A549 (cell line): ENCODE measurements at regions of chr10 and their contacts with region 1.

Region 1: DNA sequence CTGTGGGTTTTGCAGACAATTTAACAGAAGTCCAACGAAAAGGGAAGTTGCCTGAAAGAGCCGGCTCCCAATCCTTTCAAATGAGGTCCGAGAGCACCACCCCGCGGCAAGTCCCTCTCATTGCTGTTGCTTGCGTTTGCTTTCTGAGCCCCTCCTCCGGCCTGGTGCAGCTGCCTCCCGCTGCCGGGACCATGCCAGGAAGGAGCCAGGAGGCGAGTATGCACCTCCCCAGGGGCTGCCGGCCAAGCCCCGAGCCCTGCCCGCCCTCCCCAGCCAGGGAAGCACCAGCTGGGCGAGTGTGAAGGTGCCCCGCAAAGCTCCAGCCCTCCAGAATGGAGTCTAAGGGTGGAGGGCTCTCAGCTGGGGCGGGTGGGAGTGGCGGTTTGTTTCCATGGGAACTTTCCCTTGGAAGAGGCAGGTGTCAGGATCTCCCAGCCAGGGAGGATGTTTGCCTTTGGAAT is 25.8 kb upstream of the PPP2R2D start:
- DNase-seq: peak; percentile 79 to 84
- ATAC-seq: peak; percentile 64 to 92
- H3K4me3 ChIP-seq: no peak overlapping the region
- H3K27ac ChIP-seq: peak overlapping the region in 1 of 2 experiments; percentile 35; a peak in 1 of 6 replicates
- H3K4me1 ChIP-seq: peaks cover 14% of the 10 kb centered on the region; the same call in 2 of the 3 replicates
- CTCF ChIP-seq: peak; percentile 77
- EP300 ChIP-seq: no peak
- POLR2A ChIP-seq: no peak
- RAD21 ChIP-seq: peak; percentile 93

Region 2: GRCh38 chr10:130190055-130190736 is 1684.8 kb before region 1 on chr10:
- CTCF ChIA-PET with region 1: interaction called, 23 read pairs
- POLR2A ChIA-PET with region 1: no interaction called
- DNase-seq: peak; percentile 71 to 84
- ATAC-seq: peak; percentile 74 to 90
- H3K4me3 ChIP-seq: peak overlapping the region; percentile 52
- H3K27ac ChIP-seq: peak overlapping the region; percentile 66 to 89
- H3K4me1 ChIP-seq: no peaks in the 10 kb centered on the region
- CTCF ChIP-seq: peak; percentile 99
- EP300 ChIP-seq: no peak
- POLR2A ChIP-seq: no peak
- RAD21 ChIP-seq: peak; percentile 82 to 93

Region 3: GRCh38 chr10:131453594-131454355 is 421.2 kb before region 1 on chr10:
- CTCF ChIA-PET with region 1: interaction called, 10 read pairs
- POLR2A ChIA-PET with region 1: no interaction called
- DNase-seq: peak in 1 of 2 experiments; percentile 40
- ATAC-seq: peak in 1 of 2 experiments; percentile 74; a peak in 3 of 6 replicates
- H3K4me3 ChIP-seq: no peak overlapping the region
- H3K27ac ChIP-seq: no peak overlapping the region
- H3K4me1 ChIP-seq: no peaks in the 10 kb centered on the region
- CTCF ChIP-seq: peak; percentile 36
- EP300 ChIP-seq: no peak
- POLR2A ChIP-seq: no peak
- RAD21 ChIP-seq: peak in 1 of 2 experiments; percentile 36; a peak in 3 of 5 replicates

Region 4: GRCh38 chr10:131487822-131488221 is 387.2 kb before region 1 on chr10:
- CTCF ChIA-PET with region 1: no interaction called
- POLR2A ChIA-PET with region 1: no interaction called
- DNase-seq: no peak
- ATAC-seq: no peak
- H3K4me3 ChIP-seq: no peak overlapping the region
- H3K27ac ChIP-seq: no peak overlapping the region
- H3K4me1 ChIP-seq: no peaks in the 10 kb centered on the region
- CTCF ChIP-seq: no peak
- EP300 ChIP-seq: no peak
- POLR2A ChIP-seq: no peak
- RAD21 ChIP-seq: no peak

Region 5: DNA sequence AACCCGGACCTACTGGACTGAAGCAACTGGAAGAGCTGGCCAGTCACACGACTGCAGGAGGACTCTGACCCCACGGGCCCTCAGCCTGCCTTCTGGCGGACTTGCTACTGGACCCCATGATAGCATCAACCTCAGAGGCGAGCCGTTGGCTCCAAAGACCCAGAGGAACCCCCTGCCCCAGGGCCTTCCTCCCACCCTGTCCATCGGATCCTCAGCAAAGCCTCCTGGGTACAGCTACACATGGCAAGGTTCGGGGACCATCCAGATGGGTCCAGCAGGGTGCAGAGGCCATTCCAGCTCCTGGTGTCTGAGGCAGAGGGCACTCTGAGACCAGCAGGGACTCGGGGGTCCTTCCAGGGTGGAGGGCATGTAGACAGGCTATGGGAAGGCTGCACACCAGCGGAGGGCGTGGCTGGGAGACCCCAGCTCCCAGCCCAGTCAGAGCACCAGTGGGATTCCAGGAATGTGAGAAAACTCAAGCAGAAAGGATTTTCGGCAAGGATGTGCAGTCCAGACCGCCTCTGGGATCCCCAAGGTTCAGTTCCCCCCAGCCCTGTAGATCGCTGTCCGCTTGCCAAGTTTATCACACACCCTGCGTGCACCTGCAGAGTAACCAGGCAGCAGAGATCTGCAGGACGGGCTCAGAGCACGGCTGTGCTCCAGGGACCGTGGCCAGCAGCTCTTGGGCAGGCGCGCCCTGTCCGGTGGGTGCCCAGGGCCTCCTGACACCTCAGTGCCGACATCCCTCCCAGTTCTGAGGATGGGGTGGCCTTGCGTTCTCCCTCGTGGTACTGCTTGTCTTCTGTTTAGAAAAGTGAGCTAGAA is 64.0 kb before region 1 on chr10:
- CTCF ChIA-PET with region 1: no interaction called
- POLR2A ChIA-PET with region 1: no interaction called
- DNase-seq: no peak
- ATAC-seq: no peak
- H3K4me3 ChIP-seq: no peak overlapping the region
- H3K27ac ChIP-seq: no peak overlapping the region
- H3K4me1 ChIP-seq: no peaks in the 10 kb centered on the region
- CTCF ChIP-seq: no peak
- EP300 ChIP-seq: no peak
- POLR2A ChIP-seq: no peak
- RAD21 ChIP-seq: no peak

Region 6: DNA sequence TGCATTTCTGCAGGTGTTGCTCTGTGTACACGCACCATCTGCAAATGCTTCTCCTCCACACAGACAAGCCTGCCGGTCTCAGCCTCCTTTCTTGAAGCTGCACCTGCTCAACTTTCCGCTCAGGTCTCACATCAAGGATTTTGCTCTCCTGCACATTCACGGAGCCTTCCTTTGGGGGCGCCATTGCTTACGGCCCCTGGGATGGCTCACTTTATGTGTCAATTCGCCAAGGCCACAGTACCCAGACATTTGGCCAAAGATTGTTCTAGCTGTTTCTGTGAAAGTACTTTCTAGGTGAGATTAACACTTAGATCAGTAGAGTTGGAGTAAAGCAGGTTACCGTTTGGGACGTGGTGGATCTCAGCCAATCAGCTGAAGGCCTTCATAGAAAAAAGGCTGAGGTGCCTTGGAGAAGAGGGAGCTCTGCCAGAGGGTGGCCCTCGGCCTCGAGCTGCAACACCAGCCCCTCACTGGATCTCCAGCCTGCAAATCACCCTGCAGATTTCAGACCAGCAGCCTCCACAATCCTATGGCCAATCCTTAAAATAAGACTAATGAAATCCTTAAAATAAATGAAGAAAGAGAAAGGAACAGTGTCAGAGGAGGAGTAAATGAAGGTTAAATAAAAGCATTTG is 14.1 kb before region 1 on chr10:
- CTCF ChIA-PET with region 1: interaction called, 17 read pairs
- POLR2A ChIA-PET with region 1: no interaction called
- DNase-seq: no peak
- ATAC-seq: no peak
- H3K4me3 ChIP-seq: no peak overlapping the region
- H3K27ac ChIP-seq: no peak overlapping the region
- H3K4me1 ChIP-seq: no peaks in the 10 kb centered on the region
- CTCF ChIP-seq: no peak
- EP300 ChIP-seq: no peak
- POLR2A ChIP-seq: no peak
- RAD21 ChIP-seq: no peak

Region 7: GRCh38 chr10:131885391-131886161 is 10.6 kb after region 1 on chr10:
- CTCF ChIA-PET with region 1: interaction called, 10 read pairs
- POLR2A ChIA-PET with region 1: no interaction called
- DNase-seq: peak; percentile 76 to 84
- ATAC-seq: peak; percentile 91 to 99
- H3K4me3 ChIP-seq: no peak overlapping the region
- H3K27ac ChIP-seq: no peak overlapping the region
- H3K4me1 ChIP-seq: peaks cover 5% of the 10 kb centered on the region; the same call in 1 of the 3 replicates
- CTCF ChIP-seq: peak; percentile 94
- EP300 ChIP-seq: no peak
- POLR2A ChIP-seq: no peak
- RAD21 ChIP-seq: peak; percentile 88 to 89